ENCODE measurements at regions of chr7 and their contacts with region 1.

Region 1: GRCh38 chr7:27160546-27161213 is 4.2 kb upstream of the HOXA7 start:
- DNase-seq: peak; percentile 77 to 84 (median 78)
- H3K4me3 ChIP-seq: peak overlapping the region; percentile 61 to 79
- H3K4me3 Mint-ChIP-seq: peak overlapping the region; percentile 77 to 87 (median 81)
- H3K27ac ChIP-seq: no peak overlapping the region
- H3K27ac Mint-ChIP-seq: peak overlapping the region in 1 of 7 donors; percentile 88
- H3K4me1 ChIP-seq: peaks cover 38% of the 10 kb centered on the region
- H3K4me1 Mint-ChIP-seq: peaks cover 18 to 52% (median 30%) of the 10 kb centered on the region in 4 donors
- H3K27me3 ChIP-seq: peaks cover 80% of the 10 kb centered on the region
- H3K27me3 Mint-ChIP-seq: peaks cover 51 to 68% of the 10 kb centered on the region in 2 donors

Region 2: GRCh38 chr7:25862260-25863037 is 1298.2 kb before region 1 on chr7:
- CTCF ChIA-PET with region 1: interaction called, 3 read pairs
- POLR2A ChIA-PET with region 1: no interaction called
- intact Hi-C with region 1: loop called (anchors 5 kb)
- DNase-seq: peak; percentile 69 to 85 (median 78)
- H3K4me3 ChIP-seq: peak overlapping the region in 1 of 2 donors; percentile 13
- H3K4me3 Mint-ChIP-seq: peak overlapping the region; percentile 46 to 84 (median 68)
- H3K27ac ChIP-seq: no peak overlapping the region
- H3K27ac Mint-ChIP-seq: peak overlapping the region in 5 of 7 donors; percentile 45 to 94 (median 84)
- H3K4me1 ChIP-seq: peaks cover 20% of the 10 kb centered on the region
- H3K4me1 Mint-ChIP-seq: peaks cover 2 to 32% (median 14%) of the 10 kb centered on the region in 4 donors
- H3K27me3 ChIP-seq: peaks cover 91% of the 10 kb centered on the region
- H3K27me3 Mint-ChIP-seq: peaks cover 52 to 54% of the 10 kb centered on the region in 2 donors

Region 3: GRCh38 chr7:26291699-26292538 is 868.8 kb before region 1 on chr7 and contains the start of gene SNX10:
- CTCF ChIA-PET with region 1: no interaction called
- POLR2A ChIA-PET with region 1: no interaction called
- intact Hi-C with region 1: loop called (anchors 10 kb)
- DNase-seq: peak; percentile 61 to 74 (median 69)
- H3K4me3 ChIP-seq: peak within 1 kb of the TSS; percentile 43 to 61
- H3K4me3 Mint-ChIP-seq: peak within 1 kb of the TSS; percentile 90 to 97 (median 92)
- H3K27ac ChIP-seq: peak within 1 kb of the TSS; percentile 39
- H3K27ac Mint-ChIP-seq: peak within 1 kb of the TSS; percentile 79 to 93 (median 88)
- H3K4me1 ChIP-seq: peaks cover 32% of the 10 kb centered on the region
- H3K4me1 Mint-ChIP-seq: peaks cover 24 to 42% (median 34%) of the 10 kb centered on the region in 4 donors
- H3K27me3 ChIP-seq: no peaks in the 10 kb centered on the region
- H3K27me3 Mint-ChIP-seq: no peaks in the 10 kb centered on the region
- total RNA-seq, gene SNX10: 8.4 to 8.7 TPM

Region 4: DNA sequence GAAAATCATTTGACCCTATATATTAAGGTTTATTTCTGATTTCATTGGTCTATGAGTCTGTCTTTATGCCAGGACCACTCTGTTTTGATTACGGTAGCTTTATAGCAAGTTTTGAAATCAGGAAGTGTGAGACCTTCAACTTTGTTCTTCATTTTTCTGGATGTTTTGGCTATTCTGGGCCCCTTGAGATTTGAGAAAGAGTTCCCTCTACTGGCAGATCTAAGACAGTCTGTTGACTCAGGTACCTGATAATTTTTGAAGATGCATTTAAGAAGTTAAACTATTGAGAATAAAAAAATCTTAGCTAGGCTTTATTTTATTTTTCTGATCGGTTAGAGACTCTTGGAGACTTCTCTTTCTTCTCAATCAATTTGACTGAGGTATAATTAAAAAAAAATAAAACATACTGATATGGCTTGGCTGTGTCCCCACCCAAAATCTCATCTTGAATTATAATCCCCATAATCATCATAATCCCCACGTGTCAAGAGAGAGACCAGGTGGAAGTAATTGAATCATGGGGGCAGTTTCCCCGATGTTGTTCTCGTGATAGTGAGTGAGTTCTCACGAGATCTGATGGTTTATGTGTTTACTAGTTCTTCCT is 659.8 kb before region 1 on chr7:
- CTCF ChIA-PET with region 1: no interaction called
- POLR2A ChIA-PET with region 1: no interaction called
- intact Hi-C with region 1: loop called (anchors 10 kb)
- DNase-seq: peak in 3 of 5 donors; percentile 3 to 9 (median 8)
- H3K4me3 ChIP-seq: no peak overlapping the region
- H3K4me3 Mint-ChIP-seq: no peak overlapping the region
- H3K27ac ChIP-seq: no peak overlapping the region
- H3K27ac Mint-ChIP-seq: no peak overlapping the region
- H3K4me1 ChIP-seq: no peaks in the 10 kb centered on the region
- H3K4me1 Mint-ChIP-seq: no peaks in the 10 kb centered on the region
- H3K27me3 ChIP-seq: no peaks in the 10 kb centered on the region
- H3K27me3 Mint-ChIP-seq: peaks cover 8 to 16% of the 10 kb centered on the region in 2 donors

Region 5: GRCh38 chr7:26853788-26854393 is 306.8 kb before region 1 on chr7:
- CTCF ChIA-PET with region 1: interaction called, 29 read pairs
- POLR2A ChIA-PET with region 1: no interaction called
- intact Hi-C with region 1: loop called (anchors 1 kb)
- DNase-seq: peak in 4 of 5 donors; percentile 12 to 29 (median 20)
- H3K4me3 ChIP-seq: no peak overlapping the region
- H3K4me3 Mint-ChIP-seq: no peak overlapping the region
- H3K27ac ChIP-seq: no peak overlapping the region
- H3K27ac Mint-ChIP-seq: no peak overlapping the region
- H3K4me1 ChIP-seq: no peaks in the 10 kb centered on the region
- H3K4me1 Mint-ChIP-seq: peaks cover 0 to 7% (median 4%) of the 10 kb centered on the region in 4 donors
- H3K27me3 ChIP-seq: peaks cover 4% of the 10 kb centered on the region
- H3K27me3 Mint-ChIP-seq: peaks cover 10 to 30% of the 10 kb centered on the region in 2 donors

Region 6: DNA sequence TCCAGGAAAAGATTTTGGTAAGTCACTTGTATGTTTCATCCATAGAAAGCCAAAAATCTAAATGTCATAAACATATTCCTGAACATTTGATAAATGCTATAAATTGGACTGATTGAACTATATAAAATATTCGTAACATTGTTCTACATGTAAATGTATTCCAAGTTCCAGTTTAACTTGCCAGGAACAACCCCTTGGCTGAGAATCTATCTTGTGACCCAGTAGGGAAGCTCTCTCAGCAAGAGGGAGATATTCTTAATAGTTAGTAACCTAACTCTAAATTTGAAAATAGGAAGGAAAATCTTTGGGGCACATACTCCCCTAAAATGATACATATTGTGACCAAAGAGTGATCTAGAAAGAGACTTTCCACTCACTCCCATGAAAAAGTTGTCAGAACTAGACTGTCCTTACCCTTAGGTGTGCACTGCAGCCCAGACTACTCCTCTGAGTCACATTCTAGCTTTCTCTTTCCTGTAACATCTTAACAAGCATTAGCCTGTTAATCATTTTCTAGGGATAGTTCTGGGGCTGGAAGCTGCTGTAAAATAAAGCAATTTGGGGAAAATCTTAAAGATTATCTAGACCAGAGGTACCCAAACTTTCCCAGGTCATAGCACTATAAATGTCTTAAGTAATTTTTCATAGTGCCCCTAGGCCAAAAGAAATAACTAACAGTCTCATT is 222.6 kb before region 1 on chr7:
- CTCF ChIA-PET with region 1: no interaction called
- POLR2A ChIA-PET with region 1: no interaction called
- intact Hi-C with region 1: no loop called
- DNase-seq: no peak
- H3K4me3 ChIP-seq: no peak overlapping the region
- H3K4me3 Mint-ChIP-seq: no peak overlapping the region
- H3K27ac ChIP-seq: no peak overlapping the region
- H3K27ac Mint-ChIP-seq: no peak overlapping the region
- H3K4me1 ChIP-seq: no peaks in the 10 kb centered on the region
- H3K4me1 Mint-ChIP-seq: no peaks in the 10 kb centered on the region
- H3K27me3 ChIP-seq: no peaks in the 10 kb centered on the region
- H3K27me3 Mint-ChIP-seq: peaks cover 4 to 5% of the 10 kb centered on the region in 2 donors

Region 7: DNA sequence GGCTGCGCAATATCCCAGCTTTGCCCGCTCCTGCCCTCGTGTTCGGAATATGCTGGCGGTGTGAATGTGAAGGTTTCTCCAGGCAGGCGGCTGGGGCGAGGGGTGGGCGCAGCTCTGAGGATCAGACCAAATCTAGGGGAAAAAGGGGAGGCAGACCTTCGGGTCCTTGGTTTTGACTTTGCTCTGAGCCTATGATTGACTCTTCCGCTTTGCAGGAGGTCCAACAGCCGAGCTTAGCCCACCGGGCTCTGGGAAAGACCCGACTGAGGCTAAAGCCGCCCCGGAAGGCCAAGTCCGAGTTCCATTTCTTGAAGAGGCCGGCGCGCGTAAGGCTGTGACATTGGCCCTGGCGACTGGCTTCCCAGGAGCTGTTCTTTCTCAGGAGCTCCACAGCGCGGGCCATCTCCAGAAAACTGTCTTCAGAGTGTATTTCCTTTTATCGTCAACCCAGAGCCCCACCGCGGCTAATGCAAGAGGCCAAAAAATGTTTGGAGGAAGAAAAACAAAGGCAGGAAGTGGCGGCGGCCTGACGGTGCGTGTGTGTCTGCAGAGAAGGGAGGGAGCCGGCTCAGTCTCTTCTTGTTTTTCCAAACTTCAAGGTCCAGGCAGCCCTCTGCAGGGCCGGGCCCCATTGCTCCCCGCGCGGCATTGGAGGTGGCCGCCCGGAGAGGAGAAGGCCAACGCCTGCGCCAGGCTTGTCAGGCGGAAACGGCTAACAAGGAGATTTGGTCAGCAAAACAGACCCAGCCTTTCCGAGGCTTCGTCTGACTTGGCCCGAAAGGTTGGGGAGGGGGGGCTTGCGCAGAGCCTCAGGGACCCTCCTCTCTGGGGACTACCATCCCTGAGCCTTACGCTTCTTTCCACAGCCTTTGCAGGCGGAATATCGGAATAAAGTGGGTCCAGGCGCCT is 28.0 kb after region 1 on chr7:
- CTCF ChIA-PET with region 1: interaction called, 15 read pairs
- POLR2A ChIA-PET with region 1: interaction called, 5 read pairs
- intact Hi-C with region 1: no loop called
- DNase-seq: no peak
- H3K4me3 ChIP-seq: peak overlapping the region; percentile 15 to 39
- H3K4me3 Mint-ChIP-seq: peak overlapping the region; percentile 67 to 85 (median 70)
- H3K27ac ChIP-seq: no peak overlapping the region
- H3K27ac Mint-ChIP-seq: peak overlapping the region in 4 of 7 donors; percentile 43 to 89 (median 70)
- H3K4me1 ChIP-seq: peaks cover 75% of the 10 kb centered on the region
- H3K4me1 Mint-ChIP-seq: peaks cover 32 to 85% (median 54%) of the 10 kb centered on the region in 4 donors
- H3K27me3 ChIP-seq: peaks cover 91% of the 10 kb centered on the region
- H3K27me3 Mint-ChIP-seq: peaks cover 74 to 79% of the 10 kb centered on the region in 2 donors

Region 8: GRCh38 chr7:27389496-27389895 is 228.8 kb after region 1 on chr7:
- CTCF ChIA-PET with region 1: no interaction called
- POLR2A ChIA-PET with region 1: no interaction called
- intact Hi-C with region 1: no loop called
- DNase-seq: no peak
- H3K4me3 ChIP-seq: no peak overlapping the region
- H3K4me3 Mint-ChIP-seq: no peak overlapping the region
- H3K27ac ChIP-seq: no peak overlapping the region
- H3K27ac Mint-ChIP-seq: no peak overlapping the region
- H3K4me1 ChIP-seq: no peaks in the 10 kb centered on the region
- H3K4me1 Mint-ChIP-seq: no peaks in the 10 kb centered on the region
- H3K27me3 ChIP-seq: no peaks in the 10 kb centered on the region
- H3K27me3 Mint-ChIP-seq: peaks cover 16 to 18% of the 10 kb centered on the region in 2 donors

Measured in CD4-positive, alpha-beta memory T cell (primary cell).